ENCODE measurements at regions of chr1 and their contacts with region 1.

Region 1: DNA sequence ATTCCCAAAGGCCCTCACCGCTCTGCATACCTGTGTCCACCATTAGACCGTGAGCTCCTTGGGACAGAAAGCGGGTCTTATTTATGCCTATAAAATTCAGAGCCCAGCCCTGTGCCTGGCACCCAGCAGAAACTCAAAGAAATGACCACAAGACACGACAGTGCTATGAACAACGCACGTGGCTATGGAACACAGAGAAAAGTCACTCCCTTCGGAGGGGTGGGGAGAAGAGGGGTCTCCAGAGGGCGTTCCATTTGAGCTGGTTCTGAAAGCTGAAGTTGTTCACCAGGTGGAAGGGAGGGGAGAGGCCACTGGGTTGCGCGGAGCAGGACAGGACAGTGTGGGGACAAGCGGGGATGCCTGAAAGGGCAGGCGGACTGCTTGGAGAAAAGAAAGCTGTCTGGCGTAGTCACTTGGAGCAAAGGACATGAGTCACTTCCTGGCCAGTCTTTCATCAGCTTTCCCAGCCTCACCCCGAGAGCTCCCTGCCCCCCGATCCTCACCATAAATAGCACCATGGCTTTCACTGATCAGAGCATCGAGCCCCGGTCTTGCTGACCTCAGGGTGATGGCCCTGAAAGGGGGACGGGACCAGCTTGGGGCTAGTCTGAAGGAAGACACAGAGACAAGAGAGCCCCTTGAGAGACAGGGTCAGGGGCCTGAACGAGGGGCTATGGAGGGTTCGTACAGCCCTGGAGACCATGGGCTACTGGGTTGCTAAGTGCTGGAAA is 28.5 kb downstream of the ECE1 start:
- DNase-seq: peak in 1 of 3 donors; percentile 58
- ATAC-seq: peak; percentile 49 to 70 (median 58)
- H3K4me3 ChIP-seq: peak overlapping the region in 1 of 3 donors; percentile 2
- H3K27ac ChIP-seq: peak overlapping the region; percentile 69 to 74 (median 70)
- H3K4me1 ChIP-seq: peaks cover 0 to 21% (median 8%) of the 10 kb centered on the region in 4 donors
- H3K27me3 ChIP-seq: no peaks in the 10 kb centered on the region
- CTCF ChIP-seq: no peak
- POLR2A ChIP-seq: no peak

Region 2: DNA sequence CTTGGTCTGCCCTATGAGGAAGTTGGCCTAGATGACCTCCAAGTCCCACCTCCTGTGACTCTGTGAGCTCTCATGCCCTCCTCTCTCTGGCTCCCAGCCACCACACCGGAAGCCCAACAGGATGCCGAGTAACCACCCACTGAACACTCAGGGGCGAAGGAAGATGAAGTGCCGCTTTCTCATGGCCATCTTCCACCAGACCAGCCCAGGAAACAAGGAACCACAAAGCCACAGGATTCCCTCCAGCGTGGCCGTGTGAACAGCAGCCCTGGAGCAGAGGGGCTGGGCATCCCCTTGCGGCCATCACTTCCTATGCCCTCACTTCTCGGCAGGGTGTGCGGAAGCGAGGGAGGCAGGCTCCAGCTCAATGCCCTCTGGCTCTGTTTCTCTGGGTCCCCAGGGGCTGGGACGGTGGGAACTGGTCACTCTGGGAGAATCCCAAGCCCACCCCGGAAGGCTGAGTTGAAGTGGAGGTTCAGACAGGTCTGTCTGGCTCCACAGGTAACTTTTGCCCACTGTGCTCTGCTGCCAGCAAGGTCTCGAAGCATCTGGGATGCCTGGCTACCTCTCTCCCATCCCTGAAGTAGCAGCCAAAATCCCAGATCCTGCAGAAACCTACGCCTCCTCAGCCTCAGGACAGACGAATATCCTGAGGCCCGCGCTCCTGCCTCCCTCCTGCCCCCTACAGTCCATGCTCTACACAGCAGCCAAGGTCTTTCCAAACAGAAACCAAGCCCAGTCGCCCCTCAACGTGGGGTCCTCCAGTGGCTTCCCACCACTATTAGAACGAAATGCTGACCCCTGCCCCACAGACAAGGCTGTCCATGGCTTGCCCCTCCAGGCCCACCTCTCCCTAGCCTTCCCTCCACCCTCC is 72.7 kb after region 1 on chr1:
- intact Hi-C with region 1: loop called in 1 of 2 experiments (anchors 10 kb)
- DNase-seq: peak; percentile 78 to 89 (median 79)
- ATAC-seq: peak; percentile 1 to 21 (median 10)
- H3K4me3 ChIP-seq: peak overlapping the region in 1 of 3 donors; percentile 13
- H3K27ac ChIP-seq: peak overlapping the region; percentile 85 to 97 (median 88)
- H3K4me1 ChIP-seq: peaks cover 0 to 96% (median 54%) of the 10 kb centered on the region in 4 donors
- H3K27me3 ChIP-seq: no peaks in the 10 kb centered on the region
- CTCF ChIP-seq: peak; percentile 62 to 83 (median 72)
- POLR2A ChIP-seq: no peak

Measured in right lobe of liver (tissue), 6 donors.